Dorsolateral prefrontal cortex (tissue), 120 donors: ENCODE measurements at regions of chr7 and their contacts with region 1.

Region 1: GRCh38 chr7:31883761-31884164 is 186.4 kb downstream of the PDE1C start:
- DNase-seq: peak in 9 of 10 donors; percentile 13 to 73 (median 60)
- H3K4me3 ChIP-seq: peak overlapping the region in 19 of 59 donors; percentile 3 to 46 (median 12)
- H3K27ac ChIP-seq: peak overlapping the region in 56 of 59 donors; percentile 0 to 83 (median 71)
- H3K27me3 ChIP-seq: no peaks in the 10 kb centered on the region
- CTCF ChIP-seq: peak in 7 of 56 donors; percentile 8 to 25 (median 12)

Region 2: DNA sequence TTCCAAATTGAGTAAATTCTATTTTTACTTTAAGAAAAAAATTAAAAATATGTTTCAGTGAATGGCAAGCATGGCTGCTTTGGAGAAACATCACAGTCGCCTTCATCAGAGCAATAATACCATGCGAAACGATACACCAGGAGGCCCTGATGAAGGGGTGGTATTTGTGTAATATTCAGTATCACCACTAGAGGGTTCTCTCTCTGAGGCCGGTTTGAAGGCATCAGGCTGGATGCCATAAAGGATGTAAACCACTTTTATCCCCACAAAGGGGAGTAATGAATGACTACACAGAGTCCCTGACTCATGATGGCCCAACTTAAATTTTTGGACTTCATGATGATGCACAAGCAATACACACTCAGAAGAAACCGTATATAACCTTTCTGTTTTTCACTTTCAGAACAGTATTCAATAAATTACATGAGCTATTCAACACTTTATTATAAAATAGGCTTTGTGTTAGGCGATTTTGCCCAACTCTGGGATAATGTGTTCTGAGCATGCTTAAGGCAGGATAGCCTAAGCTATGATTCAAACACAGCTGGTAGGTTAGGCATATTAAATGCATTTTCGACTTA is 101.3 kb before region 1 on chr7:
- intact Hi-C with region 1: loop called (anchors 5 to 10 kb)
- DNase-seq: no peak
- H3K4me3 ChIP-seq: no peak overlapping the region
- H3K27ac ChIP-seq: peak overlapping the region in 36 of 59 donors; percentile 1 to 81 (median 58)
- H3K27me3 ChIP-seq: no peaks in the 10 kb centered on the region
- CTCF ChIP-seq: peak; percentile 54 to 90 (median 82)

Region 3: GRCh38 chr7:31788445-31788844 is 95.3 kb before region 1 on chr7:
- intact Hi-C with region 1: loop called (anchors 5 to 10 kb)
- DNase-seq: no peak
- H3K4me3 ChIP-seq: no peak overlapping the region
- H3K27ac ChIP-seq: peak overlapping the region in 50 of 59 donors; percentile 0 to 77 (median 52)
- H3K27me3 ChIP-seq: no peaks in the 10 kb centered on the region
- CTCF ChIP-seq: no peak

Region 4: DNA sequence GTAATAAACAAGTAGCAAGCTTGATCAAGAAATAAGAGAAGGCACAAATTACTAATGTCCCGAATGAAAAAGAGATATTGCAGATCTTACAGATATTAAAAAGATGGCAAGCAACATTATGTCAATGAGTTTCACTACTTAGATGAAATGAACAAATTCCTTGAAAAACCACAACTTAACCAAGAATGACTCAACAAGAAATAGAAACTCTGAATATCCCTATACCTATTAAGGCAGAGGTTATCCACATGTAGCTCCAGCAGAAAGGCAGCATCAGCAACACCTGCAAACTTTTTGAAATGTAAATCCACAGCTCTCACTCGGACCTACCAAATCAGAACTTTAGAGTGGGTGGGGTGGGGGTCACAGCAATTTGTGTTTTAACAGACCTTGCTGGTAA is 152.8 kb after region 1 on chr7:
- intact Hi-C with region 1: loop called in 1 of 2 experiments (anchors 10 kb)
- DNase-seq: no peak
- H3K4me3 ChIP-seq: no peak overlapping the region
- H3K27ac ChIP-seq: no peak overlapping the region
- H3K27me3 ChIP-seq: no peaks in the 10 kb centered on the region
- CTCF ChIP-seq: no peak

Region 5: GRCh38 chr7:32062150-32062549 is 178.4 kb after region 1 on chr7:
- intact Hi-C with region 1: loop called in 1 of 2 experiments (anchors 5 kb)
- DNase-seq: peak in 4 of 10 donors; percentile 53 to 71 (median 68)
- H3K4me3 ChIP-seq: peak overlapping the region in 12 of 59 donors; percentile 1 to 28 (median 14)
- H3K27ac ChIP-seq: peak overlapping the region in 51 of 59 donors; percentile 0 to 100 (median 81)
- H3K27me3 ChIP-seq: peaks cover 0 to 2% (median 0%) of the 10 kb centered on the region in 45 donors
- CTCF ChIP-seq: peak in 50 of 56 donors; percentile 13 to 66 (median 50)

Region 6: GRCh38 chr7:32070406-32071360 is 186.9 kb after region 1 on chr7 and contains the start of gene PDE1C:
- intact Hi-C with region 1: loop called in 1 of 2 experiments (anchors 10 kb)
- DNase-seq: peak in 9 of 10 donors; percentile 18 to 80 (median 65)
- H3K4me3 ChIP-seq: peak within 1 kb of the TSS; percentile 45 to 84 (median 70)
- H3K27ac ChIP-seq: peak within 1 kb of the TSS; percentile 58 to 100 (median 96)
- H3K27me3 ChIP-seq: peaks cover 0 to 29% (median 0%) of the 10 kb centered on the region in 45 donors
- CTCF ChIP-seq: peak in 2 of 56 donors; percentile 6 to 11
- total RNA-seq, gene PDE1C: 32.4 to 247 (median 78.1) TPM

Region 7: DNA sequence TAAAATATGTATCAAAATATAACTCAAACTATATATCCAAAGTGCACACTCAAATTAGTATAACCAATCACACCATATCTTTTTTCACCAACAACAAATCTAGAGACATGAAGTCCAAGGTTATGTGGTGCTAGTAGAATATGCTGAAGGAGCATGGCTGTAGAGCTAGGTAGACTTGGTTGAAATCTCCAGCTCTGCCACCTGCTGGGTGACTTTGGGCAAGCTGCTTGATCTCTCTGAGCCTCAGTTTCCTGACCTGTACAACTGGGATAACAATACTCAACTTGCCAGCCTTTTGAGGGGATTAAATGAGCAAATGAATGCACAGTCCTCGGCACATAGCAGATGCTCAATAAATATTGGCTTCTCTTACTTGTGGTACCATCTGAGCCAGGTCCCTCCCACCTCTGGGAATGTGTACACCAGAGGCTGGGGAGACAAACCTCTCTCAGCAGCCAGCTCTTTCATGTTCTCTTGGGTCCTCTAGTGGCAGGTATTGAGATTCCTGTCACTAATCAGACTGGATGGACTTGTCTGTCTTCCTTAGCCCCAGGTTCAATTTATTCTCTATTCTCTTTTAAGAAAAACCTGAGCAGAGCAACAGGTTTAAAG is 280.7 kb after region 1 on chr7:
- intact Hi-C with region 1: loop called in 1 of 2 experiments (anchors 10 kb)
- DNase-seq: peak in 1 of 10 donors; percentile 28
- H3K4me3 ChIP-seq: no peak overlapping the region
- H3K27ac ChIP-seq: peak overlapping the region in 4 of 59 donors; percentile 28 to 63 (median 44)
- H3K27me3 ChIP-seq: no peaks in the 10 kb centered on the region
- CTCF ChIP-seq: peak; percentile 12 to 77 (median 54)